Activated T-helper 1 cell treated with anti-CD3 and anti-CD28 coated beads, Interleukin-12 subunit alpha, Interleukin-12 subunit beta, Interleukin-2, Interleukin-4 antibody, amounts not matched to agents 30 ng/mL and 10 ng/mL and 1 ng/mL, durations not matched to agents 14 hours and 24 hours and 36 hours (primary cell): ENCODE measurements at regions of chr5 and their contacts with region 1.

Region 1: DNA sequence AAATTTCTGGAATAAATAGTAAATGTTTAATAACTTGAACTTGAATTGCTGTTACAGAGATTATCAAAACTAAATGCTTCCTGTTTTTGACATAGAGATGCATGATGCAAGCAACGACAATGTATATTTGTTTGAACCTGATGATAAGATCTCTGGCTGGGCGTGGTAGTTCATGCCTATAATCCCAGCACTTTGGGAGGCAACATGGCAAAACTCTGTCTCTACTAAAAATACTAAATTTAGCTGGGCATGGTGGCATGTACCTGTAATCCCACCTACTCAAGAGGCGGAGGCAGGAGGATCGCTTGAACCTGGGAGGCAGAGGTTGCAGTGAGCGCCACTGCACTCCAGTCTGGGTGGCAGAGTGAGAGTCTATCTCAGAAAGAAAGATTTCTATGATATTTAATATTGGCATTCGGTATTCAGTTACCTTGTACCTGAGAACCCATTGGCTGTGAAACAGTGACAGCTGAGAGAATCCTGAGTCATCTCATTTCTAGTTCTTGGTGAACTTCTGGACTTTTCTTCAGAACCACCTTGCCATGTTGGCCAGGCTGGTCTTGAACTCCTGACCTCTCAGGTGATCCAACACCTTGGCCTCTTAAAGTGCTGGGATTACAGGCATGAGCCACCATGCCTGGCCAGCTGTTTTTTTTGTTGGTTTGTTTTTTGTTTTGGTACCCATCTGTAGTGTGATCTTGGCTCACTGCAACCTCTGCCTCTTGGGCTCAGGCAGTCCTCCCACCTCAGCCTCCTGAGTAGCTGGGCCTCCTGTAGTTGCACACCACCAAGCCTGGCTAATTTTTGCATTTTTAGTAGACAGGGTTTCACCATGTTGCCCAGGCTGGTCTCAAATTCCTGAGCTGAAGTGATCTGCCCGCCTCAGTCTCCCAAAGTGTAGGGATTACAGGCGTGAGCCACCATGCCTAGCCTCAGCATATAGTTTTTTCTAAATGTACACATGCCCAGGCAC is 10.0 kb upstream of the FGF18 start:
- DNase-seq: no peak
- H3K4me3 Mint-ChIP-seq: no peak overlapping the region
- H3K27ac Mint-ChIP-seq: no peak overlapping the region
- H3K4me1 Mint-ChIP-seq: peaks cover 33% of the 10 kb centered on the region
- H3K27me3 Mint-ChIP-seq: no peaks in the 10 kb centered on the region

Region 2: GRCh38 chr5:171392585-171393159 is 16.8 kb before region 1 on chr5:
- intact Hi-C with region 1: loop called (anchors 2 kb)
- DNase-seq: no peak
- H3K4me3 Mint-ChIP-seq: peak overlapping the region; percentile 29
- H3K27ac Mint-ChIP-seq: peak overlapping the region; percentile 31
- H3K4me1 Mint-ChIP-seq: peaks cover 68% of the 10 kb centered on the region
- H3K27me3 Mint-ChIP-seq: peaks cover 2% of the 10 kb centered on the region